ENCODE measurements at regions of chr16 and their contacts with region 1.

Region 1: GRCh38 chr16:3059000-3059722 is 6.3 kb upstream of the IL32 start:
- DNase-seq: peak; percentile 99
- H3K4me3 ChIP-seq: peak overlapping the region; percentile 70 to 87
- H3K27ac ChIP-seq: peak overlapping the region; percentile 53 to 72
- H3K4me1 ChIP-seq: peaks cover 0 to 12% of the 10 kb centered on the region in 2 experiments; a peak in 1 of 4 replicates
- H3K27me3 ChIP-seq: no peaks in the 10 kb centered on the region
- CTCF ChIP-seq: peak; percentile 63
- EP300 ChIP-seq: no peak
- RAD21 ChIP-seq: peak; percentile 81

Region 2: GRCh38 chr16:2983706-2984136 is 75.4 kb before region 1 on chr16:
- CTCF ChIA-PET with region 1: no interaction called
- POLR2A ChIA-PET with region 1: no interaction called
- DNase-seq: peak; percentile 96
- H3K4me3 ChIP-seq: peak overlapping the region; percentile 13 to 57; a peak in 1 of 4 replicates
- H3K27ac ChIP-seq: no peak overlapping the region
- H3K4me1 ChIP-seq: peaks cover 4 to 24% of the 10 kb centered on the region in 2 experiments; a peak in 2 of 4 replicates
- H3K27me3 ChIP-seq: no peaks in the 10 kb centered on the region
- CTCF ChIP-seq: peak; percentile 89
- EP300 ChIP-seq: no peak
- RAD21 ChIP-seq: peak; percentile 77

Region 3: DNA sequence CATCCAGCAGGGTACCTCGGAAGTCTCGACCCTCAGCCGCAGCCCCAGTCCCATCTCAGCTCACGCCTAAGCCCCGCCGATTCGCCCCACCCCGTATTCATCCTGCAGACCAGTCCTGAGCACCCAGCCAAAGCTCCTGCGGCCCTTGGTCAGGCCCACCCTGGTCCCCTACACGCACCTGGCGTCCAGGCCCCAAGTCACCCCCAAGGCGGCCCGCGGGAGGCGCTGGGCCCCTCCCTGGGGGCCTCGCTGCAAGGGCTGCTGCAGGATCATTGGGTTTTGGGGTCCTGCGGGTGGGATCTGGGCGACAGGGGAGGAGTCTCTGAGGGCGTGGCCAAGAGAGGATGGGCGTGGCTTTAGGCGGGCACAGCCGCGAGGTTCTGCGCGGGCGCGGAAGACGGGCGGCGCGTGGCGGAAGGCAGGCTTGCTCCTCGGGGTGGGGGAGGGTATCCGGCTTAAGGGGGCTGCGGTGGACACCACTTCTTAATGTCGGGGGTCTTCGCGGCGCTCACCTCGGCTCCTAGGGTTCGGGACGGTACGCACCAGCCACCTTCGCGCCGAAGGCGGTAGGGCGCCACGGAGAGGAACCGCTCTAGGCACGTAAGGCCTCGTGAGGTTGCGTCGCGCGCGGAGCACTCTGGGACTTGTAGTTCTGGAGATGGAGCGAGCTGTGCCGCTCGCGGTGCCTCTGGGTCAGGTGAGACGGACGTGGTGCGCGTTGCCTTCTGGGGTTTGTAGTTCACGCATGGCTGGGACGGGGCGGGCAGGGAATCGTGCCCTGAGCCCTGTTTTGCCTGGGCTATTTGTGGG is 35.3 kb before region 1 on chr16 and contains the starts of genes HCFC1R1 and THOC6:
- CTCF ChIA-PET with region 1: interaction called, 63 read pairs
- POLR2A ChIA-PET with region 1: no interaction called
- DNase-seq: peak; percentile 92
- H3K4me3 ChIP-seq: peak within 1 kb of the TSS; percentile 80 to 88
- H3K27ac ChIP-seq: peak within 1 kb of the TSS; percentile 94 to 99
- H3K4me1 ChIP-seq: peaks cover 8 to 30% of the 10 kb centered on the region in 2 experiments; a peak in 3 of 4 replicates
- H3K27me3 ChIP-seq: no peaks in the 10 kb centered on the region
- CTCF ChIP-seq: no peak
- EP300 ChIP-seq: no peak; a peak in 1 of 4 replicates
- RAD21 ChIP-seq: no peak
- polyA plus RNA-seq, gene HCFC1R1: 34.7 and 54.9 TPM in 2 replicates
- polyA plus RNA-seq, gene THOC6: 35.7 and 37.7 TPM in 2 replicates

Region 4: GRCh38 chr16:3045357-3045728 is 13.8 kb before region 1 on chr16:
- CTCF ChIA-PET with region 1: interaction called, 42 read pairs
- POLR2A ChIA-PET with region 1: interaction called, 3 read pairs
- DNase-seq: no peak
- H3K4me3 ChIP-seq: peak overlapping the region; percentile 33; a peak in 3 of 4 replicates
- H3K27ac ChIP-seq: no peak overlapping the region
- H3K4me1 ChIP-seq: no peaks in the 10 kb centered on the region; a peak in 1 of 4 replicates
- H3K27me3 ChIP-seq: peaks cover 78% of the 10 kb centered on the region
- CTCF ChIP-seq: no peak
- EP300 ChIP-seq: no peak
- RAD21 ChIP-seq: no peak

Region 5: GRCh38 chr16:3087243-3088235 is 28.4 kb after region 1 on chr16:
- CTCF ChIA-PET with region 1: interaction called, 25 read pairs
- POLR2A ChIA-PET with region 1: no interaction called
- DNase-seq: no peak
- H3K4me3 ChIP-seq: no peak overlapping the region
- H3K27ac ChIP-seq: no peak overlapping the region
- H3K4me1 ChIP-seq: no peaks in the 10 kb centered on the region; a peak in 1 of 4 replicates
- H3K27me3 ChIP-seq: peaks cover 58% of the 10 kb centered on the region
- CTCF ChIP-seq: no peak; the same call in 1 of the 2 replicates
- EP300 ChIP-seq: no peak
- RAD21 ChIP-seq: no peak

Region 6: DNA sequence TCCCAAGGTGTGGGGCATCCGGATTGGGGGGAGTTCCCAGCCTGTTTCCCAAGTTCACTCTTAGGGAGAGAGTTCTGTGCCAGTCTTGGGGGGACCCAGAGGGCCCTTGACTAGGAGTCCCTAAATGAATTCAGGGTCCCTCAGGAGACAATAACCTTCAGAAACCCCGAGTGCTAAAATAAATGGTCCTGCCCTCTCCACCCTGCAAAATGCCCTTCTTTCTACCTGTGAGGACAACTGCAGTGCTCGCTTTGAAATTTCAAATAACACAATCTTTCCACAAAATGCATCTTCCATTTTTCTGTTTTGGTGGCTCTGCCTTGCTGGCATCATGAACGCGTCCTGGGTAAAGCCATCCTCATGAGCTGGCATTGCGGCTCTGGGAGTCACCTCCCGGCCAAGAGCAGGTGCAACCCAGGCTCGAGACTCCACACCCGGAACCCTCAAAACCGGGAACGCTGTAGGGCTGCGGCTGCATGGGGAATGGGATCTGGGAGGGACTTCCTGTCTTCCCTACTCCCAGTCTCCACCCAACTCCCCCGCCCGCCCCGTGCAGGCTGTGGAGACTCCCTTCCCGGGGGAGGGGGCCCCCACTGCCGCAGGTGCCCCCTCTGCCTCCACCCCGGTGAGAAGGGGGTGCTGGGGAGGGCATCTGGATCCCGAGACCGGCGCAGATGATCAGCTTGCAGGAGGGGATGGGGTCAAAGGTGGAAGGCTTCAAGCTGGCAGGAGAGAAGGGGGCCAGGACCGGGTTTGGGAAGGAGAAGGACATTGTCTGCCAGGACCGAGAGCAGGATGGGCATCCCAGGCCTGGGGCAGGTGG is 53.1 kb after region 1 on chr16 and contains the start of gene ZNF205:
- CTCF ChIA-PET with region 1: interaction called, 37 read pairs
- POLR2A ChIA-PET with region 1: no interaction called
- DNase-seq: peak; percentile 92
- H3K4me3 ChIP-seq: peak within 1 kb of the TSS; percentile 78 to 96
- H3K27ac ChIP-seq: peak within 1 kb of the TSS in 1 of 2 experiments; percentile 61; a peak in 1 of 4 replicates
- H3K4me1 ChIP-seq: peaks cover 0 to 24% of the 10 kb centered on the region in 2 experiments; a peak in 1 of 4 replicates
- H3K27me3 ChIP-seq: no peaks in the 10 kb centered on the region
- CTCF ChIP-seq: no peak
- EP300 ChIP-seq: no peak
- RAD21 ChIP-seq: no peak
- polyA plus RNA-seq, gene ZNF205: 7.6 and 9.7 TPM in 2 replicates

Region 7: GRCh38 chr16:3129137-3130131 is 70.3 kb after region 1 on chr16:
- CTCF ChIA-PET with region 1: interaction called, 56 read pairs
- POLR2A ChIA-PET with region 1: interaction called, 6 read pairs
- DNase-seq: peak; percentile 65
- H3K4me3 ChIP-seq: peak overlapping the region in 1 of 2 experiments; percentile 41; a peak in 2 of 4 replicates
- H3K27ac ChIP-seq: peak overlapping the region; percentile 14 to 35; a peak in 3 of 4 replicates
- H3K4me1 ChIP-seq: peaks cover 4 to 7% of the 10 kb centered on the region in 2 experiments; a peak in 2 of 4 replicates
- H3K27me3 ChIP-seq: no peaks in the 10 kb centered on the region
- CTCF ChIP-seq: peak; percentile 87
- EP300 ChIP-seq: no peak
- RAD21 ChIP-seq: peak; percentile 66

Region 8: DNA sequence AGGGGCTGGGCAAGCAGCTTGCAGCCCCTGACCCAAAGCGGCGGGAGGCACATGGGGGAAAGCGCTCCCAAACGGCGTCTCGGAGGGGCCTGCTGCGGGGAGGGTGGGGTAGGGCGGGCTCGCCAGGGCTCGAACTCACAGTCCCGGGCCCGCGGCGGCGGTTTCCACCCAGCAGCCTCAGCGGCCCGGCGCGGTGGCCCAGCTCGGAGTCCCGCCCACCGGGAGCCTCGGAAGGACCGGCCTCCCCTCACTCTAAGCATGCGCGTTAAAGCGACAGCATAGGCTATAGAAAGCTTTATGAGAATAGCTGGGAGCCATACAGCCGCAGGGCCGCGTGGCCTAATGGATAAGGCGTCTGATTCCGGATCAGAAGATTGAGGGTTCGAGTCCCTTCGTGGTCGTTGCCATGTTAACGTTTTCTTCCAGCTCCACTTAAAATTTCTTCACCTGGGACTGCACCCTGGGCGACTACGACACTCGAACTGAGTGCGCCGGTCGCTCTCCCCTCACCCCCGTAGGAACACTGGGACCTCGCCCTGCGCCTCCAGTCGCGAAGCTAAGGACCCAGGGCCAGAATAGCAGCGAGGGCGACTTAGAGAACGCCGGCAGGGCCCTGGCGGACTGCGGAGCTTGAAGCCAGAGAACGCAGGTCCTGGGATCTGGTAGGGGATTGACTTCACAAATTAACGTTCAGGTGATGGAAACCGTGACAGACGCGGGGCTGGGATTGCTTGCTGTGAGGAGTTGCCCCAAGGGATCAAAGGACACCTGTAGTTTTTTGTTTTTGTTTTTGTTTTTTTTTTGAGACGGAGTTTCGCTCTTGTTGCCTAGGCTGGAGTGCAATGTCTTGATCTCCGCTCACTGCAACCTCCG is 91.4 kb after region 1 on chr16:
- CTCF ChIA-PET with region 1: interaction called, 23 read pairs
- POLR2A ChIA-PET with region 1: no interaction called
- DNase-seq: peak; percentile 98
- H3K4me3 ChIP-seq: peak overlapping the region; percentile 78 to 91
- H3K27ac ChIP-seq: peak overlapping the region; percentile 66 to 73
- H3K4me1 ChIP-seq: peaks cover 0 to 13% of the 10 kb centered on the region in 2 experiments; a peak in 1 of 4 replicates
- H3K27me3 ChIP-seq: no peaks in the 10 kb centered on the region
- CTCF ChIP-seq: no peak
- EP300 ChIP-seq: peak in 1 of 2 experiments; percentile 50; a peak in 1 of 4 replicates
- RAD21 ChIP-seq: no peak